H1 (cell line): ENCODE measurements at regions of chr4 and their contacts with region 1.

Region 1: DNA sequence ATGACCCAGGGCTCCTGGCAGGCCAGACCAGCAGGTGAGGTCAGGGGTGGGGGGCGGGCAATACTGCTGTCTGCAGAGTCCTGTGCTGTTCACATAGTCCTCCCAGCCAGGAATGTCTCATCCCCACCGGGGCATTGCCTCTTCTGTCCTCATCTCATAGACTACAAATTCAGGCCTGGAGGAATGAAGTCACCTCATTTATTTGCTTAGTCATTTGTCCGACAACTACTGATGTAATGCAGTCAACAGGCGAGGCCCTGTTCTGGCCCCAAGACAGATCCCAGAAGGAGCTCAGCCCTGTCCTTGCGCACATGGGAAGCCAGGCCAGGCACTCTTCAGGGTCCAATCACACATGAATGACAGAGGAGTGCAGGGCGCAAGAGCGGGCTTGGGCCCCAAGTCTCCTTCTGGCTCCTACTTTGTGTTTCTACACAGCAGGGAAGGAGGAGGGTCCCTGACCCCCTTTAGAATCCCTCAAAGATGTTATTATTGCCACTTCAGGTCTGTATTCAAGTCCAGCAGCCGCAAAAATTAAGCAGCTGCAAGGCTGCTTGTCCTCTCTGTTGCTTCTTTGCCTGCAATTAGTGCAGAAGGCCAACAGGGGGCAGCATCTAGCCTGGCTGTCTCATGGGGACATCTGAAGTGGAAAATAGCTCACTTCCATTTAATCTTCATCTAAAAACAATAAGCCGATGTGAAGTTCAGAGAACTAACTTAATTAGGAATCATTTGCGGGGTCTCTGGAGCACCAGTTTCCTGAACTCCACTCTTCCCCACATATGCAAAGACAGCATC is 15.2 kb upstream of the HMX1 start:
- DNase-seq: no peak
- H3K4me3 ChIP-seq: no peak overlapping the region
- H3K27ac ChIP-seq: no peak overlapping the region
- H3K4me1 ChIP-seq: peaks cover 0 to 15% (median 7%) of the 10 kb centered on the region in 4 experiments; a peak in 5 of 7 replicates
- H3K27me3 ChIP-seq: peaks cover 41 to 88% (median 78%) of the 10 kb centered on the region in 4 experiments
- CTCF ChIP-seq: peak in 2 of 3 experiments; percentile 34 to 61; a peak in 2 of 4 replicates
- EP300 ChIP-seq: no peak
- POLR2A ChIP-seq: no peak
- RAD21 ChIP-seq: no peak; a peak in 1 of 4 replicates

Region 2: GRCh38 chr4:8688041-8688937 is 198.5 kb before region 1 on chr4:
- CTCF ChIA-PET with region 1: interaction called, 12 read pairs
- POLR2A ChIA-PET with region 1: no interaction called
- DNase-seq: peak; percentile 25 to 95
- H3K4me3 ChIP-seq: no peak overlapping the region
- H3K27ac ChIP-seq: no peak overlapping the region
- H3K4me1 ChIP-seq: peaks cover 0 to 3% (median under 1%) of the 10 kb centered on the region in 4 experiments; a peak in 2 of 7 replicates
- H3K27me3 ChIP-seq: peaks cover 0 to 27% (median 10%) of the 10 kb centered on the region in 4 experiments; a peak in 5 of 7 replicates
- CTCF ChIP-seq: peak in 2 of 3 experiments; percentile 92 to 95; a peak in 3 of 4 replicates
- EP300 ChIP-seq: no peak
- POLR2A ChIP-seq: no peak
- RAD21 ChIP-seq: peak; percentile 85 to 92

Region 3: GRCh38 chr4:8854931-8855330 is 31.9 kb before region 1 on chr4:
- CTCF ChIA-PET with region 1: interaction called, 14 read pairs
- POLR2A ChIA-PET with region 1: interaction called, 8 read pairs
- DNase-seq: no peak
- H3K4me3 ChIP-seq: no peak overlapping the region
- H3K27ac ChIP-seq: no peak overlapping the region
- H3K4me1 ChIP-seq: peaks cover 0 to 33% (median 23%) of the 10 kb centered on the region in 4 experiments; a peak in 6 of 7 replicates
- H3K27me3 ChIP-seq: peaks cover 59 to 70% (median 66%) of the 10 kb centered on the region in 4 experiments
- CTCF ChIP-seq: no peak
- EP300 ChIP-seq: no peak
- POLR2A ChIP-seq: no peak
- RAD21 ChIP-seq: 0 out of 4 replicates have a peak, but pooled peaks of 1 of the 2 experiments have one; percentile 7

Region 4: DNA sequence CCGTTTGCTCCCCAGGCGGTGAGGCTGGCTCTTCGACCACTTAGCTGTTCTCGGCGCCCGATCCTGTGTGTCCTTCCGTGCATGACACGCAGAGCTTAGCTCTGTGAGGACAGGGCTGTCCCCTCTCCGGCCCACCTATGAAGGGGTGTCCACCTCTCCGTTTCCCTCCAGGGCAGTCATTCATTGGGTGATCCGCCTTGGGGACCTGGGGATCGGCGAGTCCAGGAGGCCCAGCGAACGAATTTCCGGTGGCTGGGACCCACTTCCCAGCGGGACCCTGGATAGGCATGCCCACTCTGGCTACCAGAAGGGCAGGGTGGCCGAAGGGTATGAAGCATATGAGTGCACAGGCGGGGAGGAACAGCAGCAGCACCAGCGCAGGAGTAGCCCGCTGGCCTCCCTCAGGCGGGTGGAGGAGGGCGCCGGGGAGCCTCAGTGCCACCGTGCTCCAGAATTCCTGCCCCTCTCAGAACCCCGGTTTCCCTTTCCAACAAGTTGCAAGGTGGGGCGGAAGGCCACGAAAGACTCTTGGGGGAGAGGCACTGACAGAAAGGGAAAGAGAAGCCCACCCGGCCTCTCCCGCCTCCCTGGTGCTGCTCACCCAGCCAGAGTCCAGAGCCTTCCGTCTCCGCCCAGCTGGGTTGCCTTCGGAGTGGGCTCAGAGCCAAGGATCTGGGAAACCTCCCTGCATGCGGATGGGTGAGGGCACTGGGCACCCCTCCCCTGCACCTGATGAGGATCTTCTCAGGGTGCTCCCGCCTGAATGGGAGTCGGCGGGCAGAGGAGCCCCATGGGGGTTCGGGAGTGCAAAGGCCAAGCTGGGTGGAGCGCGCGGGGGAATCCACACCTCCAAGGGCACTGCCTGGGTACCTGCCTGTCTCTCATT is 23.8 kb before region 1 on chr4:
- CTCF ChIA-PET with region 1: interaction called, 23 read pairs
- POLR2A ChIA-PET with region 1: no interaction called
- DNase-seq: peak in 1 of 2 experiments; percentile 58
- H3K4me3 ChIP-seq: no peak overlapping the region
- H3K27ac ChIP-seq: no peak overlapping the region
- H3K4me1 ChIP-seq: peaks cover 3 to 34% (median 14%) of the 10 kb centered on the region in 4 experiments
- H3K27me3 ChIP-seq: peaks cover 98 to 99% (median 99%) of the 10 kb centered on the region in 4 experiments
- CTCF ChIP-seq: no peak
- EP300 ChIP-seq: no peak
- POLR2A ChIP-seq: no peak
- RAD21 ChIP-seq: no peak

Region 5: GRCh38 chr4:8874896-8875680 is 11.7 kb before region 1 on chr4:
- CTCF ChIA-PET with region 1: interaction called, 11 read pairs
- POLR2A ChIA-PET with region 1: interaction called, 7 read pairs
- DNase-seq: no peak
- H3K4me3 ChIP-seq: no peak overlapping the region
- H3K27ac ChIP-seq: no peak overlapping the region
- H3K4me1 ChIP-seq: peaks cover 0 to 23% (median 11%) of the 10 kb centered on the region in 4 experiments; a peak in 6 of 7 replicates
- H3K27me3 ChIP-seq: peaks cover 93 to 97% (median 97%) of the 10 kb centered on the region in 4 experiments
- CTCF ChIP-seq: no peak
- EP300 ChIP-seq: no peak
- POLR2A ChIP-seq: no peak
- RAD21 ChIP-seq: no peak

Region 6: GRCh38 chr4:8897251-8898167 is 10.7 kb after region 1 on chr4:
- CTCF ChIA-PET with region 1: interaction called, 31 read pairs
- POLR2A ChIA-PET with region 1: interaction called, 3 read pairs
- DNase-seq: no peak
- H3K4me3 ChIP-seq: no peak overlapping the region
- H3K27ac ChIP-seq: no peak overlapping the region
- H3K4me1 ChIP-seq: peaks cover 0 to 27% (median 17%) of the 10 kb centered on the region in 4 experiments; a peak in 6 of 7 replicates
- H3K27me3 ChIP-seq: peaks cover 33 to 53% (median 44%) of the 10 kb centered on the region in 4 experiments
- CTCF ChIP-seq: no peak
- EP300 ChIP-seq: no peak
- POLR2A ChIP-seq: no peak
- RAD21 ChIP-seq: no peak